PC-3 (cell line): ENCODE measurements at regions of chr18 and their contacts with region 1.

Region 1: GRCh38 chr18:32552421-32553030 is 81.8 kb upstream of the GAREM1 start:
- DNase-seq: peak; percentile 65
- ATAC-seq: peak; percentile 66
- H3K4me3 ChIP-seq: no peak overlapping the region
- H3K27ac ChIP-seq: no peak overlapping the region
- H3K4me1 ChIP-seq: no peaks in the 10 kb centered on the region
- H3K27me3 ChIP-seq: no peaks in the 10 kb centered on the region
- CTCF ChIP-seq: peak; percentile 57

Region 2: GRCh38 chr18:32158108-32158624 is 394.4 kb before region 1 on chr18:
- CTCF ChIA-PET with region 1: interaction called, 17 read pairs
- POLR2A ChIA-PET with region 1: interaction called, 4 read pairs
- intact Hi-C with region 1: loop called (anchors 1 kb)
- DNase-seq: peak; percentile 75
- ATAC-seq: peak; percentile 95
- H3K4me3 ChIP-seq: peak overlapping the region; percentile 54; the same call in 1 of the 2 replicates
- H3K27ac ChIP-seq: no peak overlapping the region
- H3K4me1 ChIP-seq: no peaks in the 10 kb centered on the region
- H3K27me3 ChIP-seq: no peaks in the 10 kb centered on the region
- CTCF ChIP-seq: peak; percentile 66

Region 3: DNA sequence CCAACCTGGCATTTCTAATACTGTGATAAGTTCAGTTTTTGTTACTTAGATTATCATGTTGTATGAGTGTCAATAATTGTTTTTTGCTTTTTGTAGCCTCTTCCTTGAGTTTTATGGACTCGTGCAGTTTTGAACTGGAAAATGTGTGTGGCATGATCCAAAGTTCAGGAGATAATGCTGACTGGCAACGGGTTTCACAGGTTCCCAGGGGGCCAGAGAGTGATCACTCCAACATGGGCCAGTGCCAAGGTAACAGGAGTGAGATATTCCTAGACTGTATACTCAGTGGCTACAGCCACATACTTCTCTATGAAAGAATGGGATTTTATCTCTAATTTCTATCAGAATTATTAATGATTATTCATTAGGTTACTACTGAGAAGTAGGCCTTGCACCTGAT is 344.5 kb before region 1 on chr18:
- CTCF ChIA-PET with region 1: interaction called, 12 read pairs
- POLR2A ChIA-PET with region 1: no interaction called
- intact Hi-C with region 1: no loop called
- DNase-seq: no peak
- ATAC-seq: no peak
- H3K4me3 ChIP-seq: no peak overlapping the region
- H3K27ac ChIP-seq: no peak overlapping the region
- H3K4me1 ChIP-seq: no peaks in the 10 kb centered on the region
- H3K27me3 ChIP-seq: peaks cover 8% of the 10 kb centered on the region; the same call in 1 of the 2 replicates
- CTCF ChIP-seq: no peak

Region 4: DNA sequence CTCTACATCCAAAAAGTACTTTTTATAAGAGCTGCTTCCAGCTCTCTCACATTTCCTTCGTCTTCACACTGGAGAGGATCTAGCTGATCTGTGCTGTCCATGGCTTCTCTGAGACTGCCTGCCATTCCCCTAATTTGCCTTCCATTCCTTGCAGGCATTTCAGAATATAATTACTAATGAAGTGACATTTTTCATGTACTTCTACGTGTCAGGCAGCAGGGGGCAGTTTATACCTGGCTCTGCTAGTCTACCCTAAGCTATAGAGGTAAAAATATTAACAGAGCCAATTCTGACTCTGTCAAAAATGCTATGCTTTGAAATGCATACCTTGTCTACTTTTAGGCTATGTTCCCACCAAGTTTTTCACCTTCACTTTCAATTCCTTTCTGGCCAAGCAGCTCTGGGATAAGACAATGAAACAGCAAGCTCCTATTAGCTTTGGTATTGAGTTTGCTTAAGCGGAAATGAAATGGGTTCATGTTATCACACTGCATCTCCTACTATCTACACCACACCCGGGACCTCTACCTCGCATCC is 280.8 kb before region 1 on chr18:
- CTCF ChIA-PET with region 1: no interaction called
- POLR2A ChIA-PET with region 1: no interaction called
- intact Hi-C with region 1: loop called (anchors 1 kb)
- DNase-seq: peak; percentile 30
- ATAC-seq: peak; percentile 68
- H3K4me3 ChIP-seq: no peak overlapping the region
- H3K27ac ChIP-seq: no peak overlapping the region
- H3K4me1 ChIP-seq: no peaks in the 10 kb centered on the region
- H3K27me3 ChIP-seq: no peaks in the 10 kb centered on the region
- CTCF ChIP-seq: peak; percentile 62

Region 5: DNA sequence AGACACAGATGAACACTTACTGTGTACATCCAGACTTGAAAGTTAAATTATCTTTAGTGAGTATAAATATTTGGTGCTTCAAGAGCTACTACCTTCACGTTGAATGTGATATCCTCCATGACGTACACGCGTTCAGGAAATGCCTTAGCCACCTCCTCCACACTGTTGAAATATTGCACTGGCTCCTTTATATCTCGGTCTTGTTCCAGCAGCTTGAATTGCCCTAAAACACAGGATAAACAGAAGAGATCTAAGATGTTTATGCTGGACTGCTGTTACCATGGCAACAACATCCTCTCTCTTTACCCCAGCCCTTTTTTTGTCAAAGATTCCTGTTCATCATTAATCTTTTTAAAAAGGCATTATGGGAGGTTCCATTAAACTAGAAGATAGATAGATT is 242.4 kb before region 1 on chr18:
- CTCF ChIA-PET with region 1: no interaction called
- POLR2A ChIA-PET with region 1: no interaction called
- intact Hi-C with region 1: no loop called
- DNase-seq: no peak
- ATAC-seq: no peak
- H3K4me3 ChIP-seq: no peak overlapping the region
- H3K27ac ChIP-seq: no peak overlapping the region
- H3K4me1 ChIP-seq: no peaks in the 10 kb centered on the region
- H3K27me3 ChIP-seq: no peaks in the 10 kb centered on the region
- CTCF ChIP-seq: no peak

Region 6: GRCh38 chr18:32333781-32334180 is 218.7 kb before region 1 on chr18:
- CTCF ChIA-PET with region 1: no interaction called
- POLR2A ChIA-PET with region 1: no interaction called
- intact Hi-C with region 1: loop called (anchors 5 kb)
- DNase-seq: peak; percentile 19
- ATAC-seq: peak; percentile 80
- H3K4me3 ChIP-seq: no peak overlapping the region
- H3K27ac ChIP-seq: no peak overlapping the region
- H3K4me1 ChIP-seq: peaks cover 6% of the 10 kb centered on the region; the same call in 1 of the 2 replicates
- H3K27me3 ChIP-seq: no peaks in the 10 kb centered on the region
- CTCF ChIP-seq: peak; percentile 32; the same call in 1 of the 2 replicates

Region 7: DNA sequence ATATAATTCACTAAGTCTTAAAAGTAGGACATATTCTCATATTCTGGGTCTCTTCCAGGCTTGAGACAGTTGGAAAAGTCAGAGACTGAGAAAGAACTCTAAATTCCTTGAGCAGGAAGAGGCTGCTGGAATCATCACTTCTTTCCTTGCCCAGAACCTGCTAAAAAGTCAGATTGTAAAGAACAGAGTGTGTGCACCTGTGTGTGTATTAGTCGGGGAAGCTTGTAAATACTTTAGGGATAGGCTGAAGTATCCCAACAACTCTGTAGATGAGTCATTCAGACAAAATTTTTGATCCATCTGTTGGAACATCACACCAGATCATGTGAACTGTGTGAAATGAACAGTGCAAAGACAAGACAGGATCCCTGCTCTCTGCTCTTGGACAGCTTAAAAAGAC is 97.9 kb before region 1 on chr18:
- CTCF ChIA-PET with region 1: no interaction called
- POLR2A ChIA-PET with region 1: no interaction called
- intact Hi-C with region 1: no loop called
- DNase-seq: peak; percentile 11
- ATAC-seq: peak; percentile 40
- H3K4me3 ChIP-seq: no peak overlapping the region
- H3K27ac ChIP-seq: no peak overlapping the region
- H3K4me1 ChIP-seq: no peaks in the 10 kb centered on the region
- H3K27me3 ChIP-seq: no peaks in the 10 kb centered on the region
- CTCF ChIP-seq: no peak

Region 8: DNA sequence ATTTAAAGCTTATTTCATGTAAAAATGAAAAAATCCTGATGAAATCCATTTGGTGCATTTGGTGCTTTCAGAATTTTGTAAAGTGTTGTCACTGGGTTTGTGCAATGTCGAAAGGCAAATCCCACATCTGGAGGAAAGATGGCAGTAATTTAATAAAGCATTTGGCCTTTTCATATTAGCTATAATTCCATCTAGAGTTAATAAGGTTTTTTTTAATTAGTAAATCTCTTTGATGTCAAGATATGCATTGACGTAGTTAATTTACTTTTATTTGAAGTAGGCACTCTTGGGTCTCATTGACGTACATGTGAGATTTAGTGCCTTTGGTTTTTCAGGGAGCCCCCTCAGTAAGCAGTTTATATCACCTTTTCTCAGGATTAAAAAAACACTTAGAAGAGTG is 69.5 kb before region 1 on chr18:
- CTCF ChIA-PET with region 1: no interaction called
- POLR2A ChIA-PET with region 1: no interaction called
- intact Hi-C with region 1: no loop called
- DNase-seq: no peak
- ATAC-seq: no peak
- H3K4me3 ChIP-seq: no peak overlapping the region
- H3K27ac ChIP-seq: no peak overlapping the region
- H3K4me1 ChIP-seq: no peaks in the 10 kb centered on the region
- H3K27me3 ChIP-seq: no peaks in the 10 kb centered on the region
- CTCF ChIP-seq: no peak

Region 9: DNA sequence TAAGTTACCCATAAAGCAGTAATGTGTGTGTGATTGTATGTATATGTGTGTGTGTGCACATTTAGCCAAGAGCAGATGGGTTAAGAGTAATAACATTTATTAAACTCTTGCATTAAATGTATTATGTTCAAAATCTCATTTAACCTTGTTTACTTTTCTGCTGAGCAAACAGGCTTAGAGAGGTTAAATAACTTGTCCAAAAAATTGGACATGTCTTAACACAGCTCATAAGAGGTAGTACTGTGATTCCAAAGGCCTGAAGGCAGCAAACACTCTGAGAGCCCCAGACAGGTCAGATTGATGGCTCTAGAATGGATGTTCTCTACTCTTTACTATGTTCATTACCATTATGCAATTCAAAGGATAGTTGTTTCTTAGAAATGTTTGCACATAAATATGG is 39.8 kb after region 1 on chr18:
- CTCF ChIA-PET with region 1: no interaction called
- POLR2A ChIA-PET with region 1: no interaction called
- intact Hi-C with region 1: no loop called
- DNase-seq: no peak
- ATAC-seq: no peak
- H3K4me3 ChIP-seq: no peak overlapping the region
- H3K27ac ChIP-seq: no peak overlapping the region
- H3K4me1 ChIP-seq: no peaks in the 10 kb centered on the region
- H3K27me3 ChIP-seq: peaks cover 3% of the 10 kb centered on the region; the same call in 1 of the 2 replicates
- CTCF ChIP-seq: no peak